Posterior cingulate gyrus (tissue), 11 donors: ENCODE measurements at regions of chr6 and their contacts with region 1.

Region 1: GRCh38 chr6:85537055-85537494 is 56.6 kb downstream of the SNX14 start:
- DNase-seq: no peak

Region 2: DNA sequence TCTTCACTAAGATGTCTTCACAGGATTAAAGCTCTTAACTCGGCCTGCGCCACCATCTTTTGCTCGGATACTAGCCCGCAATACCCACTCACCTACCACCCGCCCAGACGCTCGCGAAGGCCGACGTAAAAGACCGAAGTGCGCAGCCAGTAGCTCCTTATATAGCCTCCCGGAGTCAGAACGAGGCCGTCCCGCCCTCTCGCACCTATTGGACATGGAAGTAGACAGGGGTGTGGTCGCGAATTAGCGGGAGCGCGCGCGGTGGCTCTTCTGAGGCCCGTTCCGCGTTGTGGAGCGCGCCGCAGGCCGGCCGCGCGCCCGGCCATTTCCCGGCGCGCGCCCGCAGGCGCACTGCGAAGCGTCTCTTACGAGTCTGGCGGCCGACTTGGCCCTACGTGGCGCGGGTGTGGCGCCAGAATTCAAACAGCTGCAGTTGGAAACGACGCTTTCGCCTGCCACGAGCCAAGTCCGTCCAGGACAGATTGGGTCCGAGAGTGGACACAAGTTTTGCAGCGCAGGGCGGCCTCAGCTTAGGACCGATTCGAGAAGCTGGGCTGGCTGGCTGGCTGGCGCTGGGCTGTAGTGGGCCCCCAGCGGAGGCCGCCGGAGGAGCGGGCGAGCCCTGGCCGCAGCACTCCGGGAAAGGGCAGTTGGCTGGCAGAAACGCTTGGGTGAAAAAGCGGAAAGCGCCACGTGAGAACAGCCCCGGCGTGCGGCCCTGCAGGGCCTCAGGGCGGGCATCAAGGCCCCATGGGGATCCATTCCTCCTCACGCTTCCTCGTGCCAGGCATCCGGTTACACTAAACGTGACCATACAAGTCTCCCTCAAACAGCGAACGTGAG is 141.7 kb after region 1 on chr6:
- intact Hi-C with region 1: loop called (anchors 5 kb)
- DNase-seq: peak; percentile 95 to 100 (median 97)

Region 3: GRCh38 chr6:85772641-85773040 is 235.6 kb after region 1 on chr6:
- intact Hi-C with region 1: no loop called
- DNase-seq: peak in 1 of 10 donors; percentile 45